B cell (primary cell): ENCODE measurements at regions of chr6 and their contacts with region 1.

Region 1: DNA sequence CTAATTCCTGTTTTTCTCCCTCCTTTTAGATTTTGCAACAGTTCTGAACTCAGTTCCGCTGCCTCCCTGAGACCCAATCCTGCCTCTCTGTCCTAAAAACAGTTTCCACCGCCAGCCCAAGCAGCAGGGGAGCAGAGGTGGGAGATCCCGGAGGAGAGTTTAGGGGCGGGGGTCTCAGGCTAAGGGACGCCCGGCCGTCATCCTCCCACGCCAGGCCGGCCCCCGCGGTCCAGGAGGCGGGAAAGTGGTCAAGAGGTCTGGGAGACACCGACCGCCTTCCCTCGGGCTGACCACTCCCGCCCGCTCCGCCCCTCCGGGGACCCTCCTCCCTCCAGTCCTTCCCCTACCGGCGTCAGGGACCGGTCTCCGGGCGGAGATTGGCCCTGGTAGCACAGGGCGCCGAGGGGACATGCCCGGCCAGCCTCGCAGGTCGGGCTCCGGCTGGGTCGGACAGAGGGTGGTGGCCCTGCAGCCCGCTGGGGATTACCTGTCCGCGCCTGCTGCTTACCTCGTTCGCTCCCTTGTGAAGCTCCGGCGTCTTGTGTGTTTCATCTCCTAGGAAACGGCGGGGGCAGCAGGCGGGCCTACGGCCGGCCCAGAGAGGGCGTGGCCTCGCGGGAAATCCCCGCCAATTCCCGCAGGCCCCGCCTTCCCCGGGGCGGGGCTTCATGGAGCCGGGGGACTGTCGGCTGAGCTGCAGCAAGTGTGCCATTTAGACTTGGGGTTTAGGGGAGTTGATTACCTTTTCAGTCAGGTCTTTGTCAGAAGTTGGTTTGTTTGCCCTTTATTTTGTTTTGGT is at the start of gene MAK:
- DNase-seq: peak; percentile 96
- ATAC-seq: peak; percentile 96
- H3K4me3 ChIP-seq: peak within 1 kb of the TSS; percentile 59 to 78 (median 66)
- H3K4me3 Mint-ChIP-seq: peak within 1 kb of the TSS; percentile 93
- H3K27ac ChIP-seq: peak within 1 kb of the TSS in 1 of 2 donors; percentile 67
- H3K27ac Mint-ChIP-seq: peak within 1 kb of the TSS; percentile 91
- H3K4me1 ChIP-seq: peaks cover 26 to 27% of the 10 kb centered on the region in 2 donors
- H3K4me1 Mint-ChIP-seq: peaks cover 27% of the 10 kb centered on the region
- H3K27me3 ChIP-seq: peaks cover 0 to 40% (median 28%) of the 10 kb centered on the region in 4 experiments
- H3K27me3 Mint-ChIP-seq: peaks cover 55% of the 10 kb centered on the region
- CTCF ChIP-seq: no peak
- total RNA-seq, gene MAK: not detected in 2 replicates

Region 2: GRCh38 chr6:10276106-10276505 is 562.1 kb before region 1 on chr6:
- CTCF ChIA-PET with region 1: no interaction called
- POLR2A ChIA-PET with region 1: no interaction called
- intact Hi-C with region 1: no loop called
- DNase-seq: no peak
- ATAC-seq: no peak
- H3K4me3 ChIP-seq: no peak overlapping the region
- H3K4me3 Mint-ChIP-seq: no peak overlapping the region
- H3K27ac ChIP-seq: no peak overlapping the region
- H3K27ac Mint-ChIP-seq: no peak overlapping the region
- H3K4me1 ChIP-seq: no peaks in the 10 kb centered on the region
- H3K4me1 Mint-ChIP-seq: no peaks in the 10 kb centered on the region
- H3K27me3 ChIP-seq: no peaks in the 10 kb centered on the region
- H3K27me3 Mint-ChIP-seq: peaks cover 5% of the 10 kb centered on the region
- CTCF ChIP-seq: no peak

Region 3: GRCh38 chr6:10534419-10534762 is 303.8 kb before region 1 on chr6:
- CTCF ChIA-PET with region 1: no interaction called
- POLR2A ChIA-PET with region 1: no interaction called
- intact Hi-C with region 1: loop called (anchors 2 kb)
- DNase-seq: peak; percentile 77
- ATAC-seq: peak; percentile 65
- H3K4me3 ChIP-seq: peak overlapping the region in 2 of 5 experiments; percentile 9 to 63
- H3K4me3 Mint-ChIP-seq: peak overlapping the region; percentile 74
- H3K27ac ChIP-seq: peak overlapping the region; percentile 56 to 86
- H3K27ac Mint-ChIP-seq: peak overlapping the region; percentile 95
- H3K4me1 ChIP-seq: peaks cover 67 to 76% of the 10 kb centered on the region in 2 donors
- H3K4me1 Mint-ChIP-seq: peaks cover 80% of the 10 kb centered on the region
- H3K27me3 ChIP-seq: no peaks in the 10 kb centered on the region
- H3K27me3 Mint-ChIP-seq: no peaks in the 10 kb centered on the region
- CTCF ChIP-seq: no peak

Region 4: DNA sequence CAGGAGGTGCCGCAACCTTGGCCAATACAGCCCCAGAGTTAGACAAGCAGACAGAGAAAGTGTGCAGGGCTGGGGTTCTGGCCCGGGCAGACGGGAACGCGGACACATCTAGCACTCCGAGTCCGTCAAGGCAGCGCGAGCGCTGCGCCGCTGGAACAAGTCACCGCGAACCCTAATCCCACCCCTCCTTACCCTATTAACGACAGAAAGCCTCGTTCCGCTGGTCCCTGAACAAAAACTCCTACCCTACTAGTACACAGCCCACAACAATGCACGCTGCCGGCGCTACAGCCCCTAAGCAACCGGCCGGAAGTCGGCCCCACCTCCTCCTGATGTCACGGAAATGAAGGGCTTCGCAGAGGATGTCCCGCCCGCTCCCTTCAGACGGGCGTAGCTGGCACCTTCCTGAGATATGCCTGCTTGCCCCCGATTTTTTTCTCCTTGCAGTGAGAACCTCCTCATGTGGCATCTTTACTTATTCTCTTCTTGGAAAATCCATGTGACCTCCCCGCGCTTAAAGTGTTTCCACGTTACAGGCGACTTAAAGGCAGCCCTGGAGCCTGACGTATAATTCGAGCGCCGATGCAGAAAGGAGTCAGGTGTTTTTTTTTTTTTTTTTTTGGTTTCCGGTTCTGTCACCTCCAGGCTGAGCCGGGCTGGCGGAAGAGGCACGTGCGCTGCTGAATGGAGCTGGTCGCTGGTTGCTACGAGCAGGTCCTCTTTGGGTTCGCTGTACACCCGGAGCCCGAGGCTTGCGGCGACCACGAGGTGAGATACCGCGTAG is 143.7 kb before region 1 on chr6 and contains the starts of genes C6orf52 and PAK1IP1:
- CTCF ChIA-PET with region 1: no interaction called
- POLR2A ChIA-PET with region 1: no interaction called
- intact Hi-C with region 1: no loop called
- DNase-seq: peak; percentile 98
- ATAC-seq: peak; percentile 94
- H3K4me3 ChIP-seq: peak within 1 kb of the TSS; percentile 73 to 97 (median 95)
- H3K4me3 Mint-ChIP-seq: peak within 1 kb of the TSS; percentile 97
- H3K27ac ChIP-seq: peak within 1 kb of the TSS; percentile 96 to 99
- H3K27ac Mint-ChIP-seq: peak within 1 kb of the TSS; percentile 100
- H3K4me1 ChIP-seq: peaks cover 16 to 28% of the 10 kb centered on the region in 2 donors
- H3K4me1 Mint-ChIP-seq: peaks cover 30% of the 10 kb centered on the region
- H3K27me3 ChIP-seq: no peaks in the 10 kb centered on the region
- H3K27me3 Mint-ChIP-seq: no peaks in the 10 kb centered on the region
- CTCF ChIP-seq: no peak
- total RNA-seq, gene C6orf52: 1.2 TPM in 1 of 2 replicates, not detected in the other
- total RNA-seq, gene PAK1IP1: 6.1 TPM in 2 replicates

Region 5: GRCh38 chr6:10886691-10887535 is 48.7 kb after region 1 on chr6 and contains the start of gene SYCP2L:
- CTCF ChIA-PET with region 1: interaction called, 3 read pairs
- POLR2A ChIA-PET with region 1: no interaction called
- intact Hi-C with region 1: loop called (anchors 1 kb)
- DNase-seq: peak; percentile 76
- ATAC-seq: no peak
- H3K4me3 ChIP-seq: peak within 1 kb of the TSS in 4 of 5 experiments; percentile 25 to 53 (median 38)
- H3K4me3 Mint-ChIP-seq: peak within 1 kb of the TSS; percentile 79
- H3K27ac ChIP-seq: no peak within 1 kb of the TSS
- H3K27ac Mint-ChIP-seq: peak within 1 kb of the TSS; percentile 16
- H3K4me1 ChIP-seq: peaks cover 44 to 46% of the 10 kb centered on the region in 2 donors
- H3K4me1 Mint-ChIP-seq: peaks cover 35% of the 10 kb centered on the region
- H3K27me3 ChIP-seq: peaks cover 0 to 58% (median 53%) of the 10 kb centered on the region in 4 experiments
- H3K27me3 Mint-ChIP-seq: peaks cover 53% of the 10 kb centered on the region
- CTCF ChIP-seq: peak; percentile 26
- total RNA-seq, gene SYCP2L: not detected in 2 replicates

Region 6: DNA sequence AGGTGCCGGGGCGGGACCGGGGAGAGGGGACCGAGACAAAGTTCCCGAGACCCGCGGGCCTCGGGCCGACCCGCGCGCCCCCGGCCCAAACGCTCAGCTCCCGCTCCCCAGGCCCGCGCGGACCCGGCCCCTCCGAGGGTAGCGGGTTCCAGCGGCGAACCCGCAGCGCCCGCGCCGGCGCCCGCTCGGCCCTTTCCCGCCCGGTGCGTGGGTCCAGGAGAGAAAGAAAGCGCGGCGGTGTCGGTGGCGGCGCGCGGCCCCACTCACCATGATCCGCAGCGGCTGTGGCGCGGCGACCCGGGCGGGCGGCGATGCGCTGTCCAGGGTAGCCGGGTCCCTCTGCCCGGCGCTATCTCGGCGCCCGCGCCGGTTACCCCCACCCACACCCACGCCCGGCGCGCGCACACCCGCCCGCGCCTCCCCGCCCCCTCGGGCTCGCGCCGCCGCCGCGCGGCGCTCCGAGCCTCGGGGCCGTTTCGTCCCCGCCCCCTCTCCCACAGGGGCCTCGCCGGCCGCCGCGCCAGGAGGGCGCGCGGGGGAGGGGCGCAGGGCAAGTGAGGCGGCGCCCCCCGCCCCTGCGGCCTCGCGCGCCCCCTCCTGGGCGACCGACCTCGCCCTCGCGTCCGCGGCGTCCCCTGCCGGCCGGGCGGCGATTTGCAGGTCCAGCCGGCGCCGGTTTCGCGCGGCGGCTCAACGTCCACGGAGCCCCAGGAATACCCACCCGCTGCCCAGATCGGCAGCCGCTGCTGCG is 205.9 kb after region 1 on chr6 and contains the start of gene ELOVL2:
- CTCF ChIA-PET with region 1: no interaction called
- POLR2A ChIA-PET with region 1: no interaction called
- intact Hi-C with region 1: loop called (anchors 5 kb)
- DNase-seq: peak; percentile 59
- ATAC-seq: peak; percentile 73
- H3K4me3 ChIP-seq: peak within 1 kb of the TSS in 4 of 5 experiments; percentile 27 to 58 (median 47)
- H3K4me3 Mint-ChIP-seq: peak within 1 kb of the TSS; percentile 79
- H3K27ac ChIP-seq: no peak within 1 kb of the TSS
- H3K27ac Mint-ChIP-seq: peak within 1 kb of the TSS; percentile 33
- H3K4me1 ChIP-seq: peaks cover 13% of the 10 kb centered on the region in 2 donors
- H3K4me1 Mint-ChIP-seq: peaks cover 14% of the 10 kb centered on the region
- H3K27me3 ChIP-seq: peaks cover 0 to 44% (median 36%) of the 10 kb centered on the region in 4 experiments
- H3K27me3 Mint-ChIP-seq: peaks cover 61% of the 10 kb centered on the region
- CTCF ChIP-seq: peak; percentile 45
- total RNA-seq, gene ELOVL2: not detected in 2 replicates

Region 7: GRCh38 chr6:11232193-11232769 is 394.1 kb after region 1 on chr6 and contains the start of gene NEDD9:
- CTCF ChIA-PET with region 1: no interaction called
- POLR2A ChIA-PET with region 1: no interaction called
- intact Hi-C with region 1: loop called (anchors 5 kb)
- DNase-seq: peak; percentile 93
- ATAC-seq: peak; percentile 100
- H3K4me3 ChIP-seq: peak within 1 kb of the TSS; percentile 52 to 76 (median 67)
- H3K4me3 Mint-ChIP-seq: peak within 1 kb of the TSS; percentile 98
- H3K27ac ChIP-seq: peak within 1 kb of the TSS; percentile 70 to 81
- H3K27ac Mint-ChIP-seq: peak within 1 kb of the TSS; percentile 93
- H3K4me1 ChIP-seq: peaks cover 35 to 37% of the 10 kb centered on the region in 2 donors
- H3K4me1 Mint-ChIP-seq: peaks cover 54% of the 10 kb centered on the region
- H3K27me3 ChIP-seq: no peaks in the 10 kb centered on the region
- H3K27me3 Mint-ChIP-seq: no peaks in the 10 kb centered on the region
- CTCF ChIP-seq: no peak
- total RNA-seq, gene NEDD9: 46.2 and 50.9 TPM in 2 replicates